Transverse colon (tissue), 4 donors: ENCODE measurements at regions of chr12 and their contacts with region 1.

Region 1: DNA sequence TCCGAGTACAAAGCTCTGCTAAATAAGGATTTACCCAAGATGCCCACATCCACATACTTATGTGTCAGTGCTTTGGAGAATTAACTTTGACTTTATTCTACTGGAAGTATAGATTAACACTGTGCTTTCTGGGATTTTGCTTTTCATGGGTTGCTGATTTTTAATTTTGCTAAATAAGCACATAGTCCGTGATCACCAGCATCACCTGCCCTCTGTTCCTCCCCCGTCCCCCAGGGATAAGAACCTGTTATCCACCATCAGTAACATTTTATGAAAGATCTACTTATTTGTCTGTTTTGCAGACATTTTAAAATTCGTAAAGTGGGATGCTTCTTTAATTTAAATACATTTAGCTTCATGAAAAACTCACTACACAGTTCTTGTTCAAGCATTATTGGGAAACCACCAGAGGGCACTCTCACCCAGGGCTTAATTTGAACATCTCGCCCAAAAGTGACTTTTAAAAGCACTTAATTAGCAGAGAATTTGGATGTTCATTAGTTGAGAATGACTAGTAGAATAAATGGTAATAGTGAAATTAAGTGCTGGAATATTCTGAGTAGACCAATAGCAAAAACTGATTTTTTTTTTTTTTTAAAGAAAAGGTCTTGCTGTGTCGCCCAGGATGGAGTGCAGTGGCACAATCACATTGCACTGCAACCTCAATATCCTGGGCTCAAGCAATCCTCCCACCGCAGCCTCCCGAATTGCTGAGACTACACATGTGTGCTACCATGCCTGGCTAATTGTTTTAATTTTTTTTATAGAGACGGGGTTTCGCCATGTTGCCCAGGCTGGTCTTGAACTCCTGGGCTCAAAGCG is 35.7 kb downstream of the MRPL42 start:
- DNase-seq: peak; percentile 43
- H3K4me3 ChIP-seq: no peak overlapping the region
- H3K27ac ChIP-seq: no peak overlapping the region
- H3K4me1 ChIP-seq: no peaks in the 10 kb centered on the region
- H3K27me3 ChIP-seq: no peaks in the 10 kb centered on the region
- CTCF ChIP-seq: peak; percentile 71 to 80 (median 74)
- EP300 ChIP-seq: no peak
- POLR2A ChIP-seq: no peak

Region 2: DNA sequence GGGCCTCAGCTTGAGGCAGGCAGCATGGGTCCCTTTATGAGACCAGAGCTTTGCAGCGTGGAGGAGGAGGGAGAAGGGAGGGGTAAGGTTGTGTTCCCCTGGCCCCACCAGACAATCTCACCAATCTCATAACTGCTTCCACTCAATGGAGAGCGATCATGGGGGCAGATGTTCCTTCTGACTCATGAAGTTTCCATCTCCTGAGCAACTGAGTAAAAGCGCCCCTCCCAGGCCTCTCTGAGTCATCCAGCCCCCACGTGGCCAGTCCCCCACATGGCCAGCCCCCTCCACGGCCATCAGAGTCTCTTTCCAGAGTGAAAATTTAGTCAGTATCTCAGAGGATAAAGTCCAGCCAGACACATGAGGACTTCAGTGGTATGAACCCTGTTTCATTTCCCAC is 606.1 kb after region 1 on chr12:
- in situ Hi-C with region 1: loop called (anchors 5 to 10 kb)
- intact Hi-C with region 1: no loop called
- DNase-seq: no peak
- H3K4me3 ChIP-seq: no peak overlapping the region
- H3K27ac ChIP-seq: no peak overlapping the region
- H3K4me1 ChIP-seq: no peaks in the 10 kb centered on the region
- H3K27me3 ChIP-seq: no peaks in the 10 kb centered on the region
- CTCF ChIP-seq: no peak
- EP300 ChIP-seq: no peak
- POLR2A ChIP-seq: no peak